ENCODE measurements at regions of chr18 and their contacts with region 1.

Region 1: GRCh38 chr18:21997207-21998143 is 171.9 kb upstream of the GATA6 start:
- DNase-seq: peak; percentile 23
- ATAC-seq: peak; percentile 87
- H3K4me3 Mint-ChIP-seq: no peak overlapping the region
- H3K27ac Mint-ChIP-seq: no peak overlapping the region
- H3K4me1 Mint-ChIP-seq: peaks cover 11% of the 10 kb centered on the region
- H3K27me3 Mint-ChIP-seq: peaks cover 25% of the 10 kb centered on the region
- CTCF ChIP-seq: peak; percentile 69

Region 2: GRCh38 chr18:21704603-21705364 is 292.7 kb before region 1 on chr18 and contains the start of gene ABHD3:
- CTCF ChIA-PET with region 1: no interaction called
- POLR2A ChIA-PET with region 1: no interaction called
- DNase-seq: peak; percentile 93
- ATAC-seq: peak; percentile 96
- H3K4me3 Mint-ChIP-seq: peak within 1 kb of the TSS; percentile 86
- H3K27ac Mint-ChIP-seq: peak within 1 kb of the TSS; percentile 69
- H3K4me1 Mint-ChIP-seq: peaks cover 17% of the 10 kb centered on the region
- H3K27me3 Mint-ChIP-seq: peaks cover 12% of the 10 kb centered on the region
- CTCF ChIP-seq: no peak
- total RNA-seq, gene ABHD3: 11.1 to 12.1 TPM (median 11.5 TPM) in 3 replicates

Region 3: DNA sequence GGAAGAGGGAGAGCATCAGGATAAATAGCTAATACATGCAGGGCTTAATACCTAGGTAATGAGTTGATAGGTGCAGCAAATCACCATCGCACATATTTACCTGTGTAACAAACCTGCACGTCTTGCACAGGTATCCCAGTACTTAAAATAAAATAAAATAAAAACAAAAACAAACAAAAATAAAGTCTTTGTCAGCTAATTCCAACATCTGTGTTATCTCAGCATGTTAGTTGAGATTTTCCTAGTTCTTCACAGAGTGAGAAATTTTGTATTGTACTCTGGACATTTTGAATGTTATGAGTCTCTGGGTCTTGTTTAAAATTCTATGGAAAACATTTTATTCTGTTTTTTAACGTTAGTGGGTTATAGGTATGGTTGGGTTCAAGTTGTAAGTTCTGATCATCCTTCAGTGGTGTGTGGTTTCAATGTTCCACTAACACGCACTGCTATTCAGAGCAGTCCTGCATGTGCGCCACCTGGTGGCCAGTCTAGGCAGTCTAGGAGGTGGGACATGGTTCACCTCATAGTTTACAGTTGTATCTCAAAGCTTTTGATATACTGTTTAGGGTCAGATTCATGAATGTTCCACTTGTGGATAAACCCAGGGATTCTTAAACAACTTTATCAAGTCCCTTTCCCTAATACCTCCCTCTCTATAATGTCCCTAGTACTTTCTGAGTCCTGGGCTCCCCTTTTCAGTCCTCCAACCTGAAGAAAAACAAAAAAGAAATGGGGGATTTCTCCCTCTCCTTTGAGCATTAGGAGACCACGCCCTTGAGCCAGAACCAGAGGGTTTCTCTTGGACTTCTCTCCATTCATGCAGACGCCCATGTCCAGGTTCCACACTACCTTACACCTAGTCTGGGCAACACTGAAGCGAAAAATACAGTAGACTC is 41.5 kb before region 1 on chr18:
- CTCF ChIA-PET with region 1: interaction called, 12 read pairs
- POLR2A ChIA-PET with region 1: no interaction called
- DNase-seq: peak; percentile 87
- ATAC-seq: peak; percentile 95
- H3K4me3 Mint-ChIP-seq: no peak overlapping the region
- H3K27ac Mint-ChIP-seq: no peak overlapping the region
- H3K4me1 Mint-ChIP-seq: no peaks in the 10 kb centered on the region
- H3K27me3 Mint-ChIP-seq: peaks cover 10% of the 10 kb centered on the region
- CTCF ChIP-seq: peak; percentile 90

Region 4: GRCh38 chr18:22032392-22032961 is 35.0 kb after region 1 on chr18:
- CTCF ChIA-PET with region 1: interaction called, 12 read pairs
- POLR2A ChIA-PET with region 1: no interaction called
- DNase-seq: no peak
- ATAC-seq: no peak
- H3K4me3 Mint-ChIP-seq: no peak overlapping the region
- H3K27ac Mint-ChIP-seq: no peak overlapping the region
- H3K4me1 Mint-ChIP-seq: peaks cover 3% of the 10 kb centered on the region; the same call in 1 of the 2 replicates
- H3K27me3 Mint-ChIP-seq: no peaks in the 10 kb centered on the region; the same call in 1 of the 2 replicates
- CTCF ChIP-seq: no peak

Region 5: DNA sequence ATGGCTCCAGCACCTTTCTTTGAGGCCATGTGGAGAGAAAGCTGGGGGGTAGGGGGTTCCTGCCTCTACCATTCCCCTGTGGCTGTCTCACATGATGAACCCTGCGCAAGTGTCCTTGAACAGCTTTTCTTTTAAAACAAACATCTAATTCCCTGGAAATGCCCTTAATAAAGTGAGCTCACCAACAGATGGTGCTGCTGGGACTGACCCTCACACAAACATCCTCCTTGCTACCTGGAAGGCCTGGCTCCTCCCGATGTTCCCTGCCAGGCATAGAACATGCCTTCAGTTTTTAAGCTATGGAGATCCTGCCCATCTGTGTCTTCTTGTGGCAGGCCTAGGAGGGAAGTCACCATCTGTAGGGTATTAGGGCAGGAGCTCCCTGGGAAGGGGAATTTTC is 111.2 kb after region 1 on chr18:
- CTCF ChIA-PET with region 1: interaction called, 18 read pairs
- POLR2A ChIA-PET with region 1: no interaction called
- DNase-seq: peak; percentile 21
- ATAC-seq: peak; percentile 84
- H3K4me3 Mint-ChIP-seq: no peak overlapping the region
- H3K27ac Mint-ChIP-seq: no peak overlapping the region
- H3K4me1 Mint-ChIP-seq: peaks cover 18% of the 10 kb centered on the region
- H3K27me3 Mint-ChIP-seq: peaks cover 10% of the 10 kb centered on the region
- CTCF ChIP-seq: no peak

Measured in WTC11 (cell line).